AG04450 (cell line): ENCODE measurements at regions of chr1 and their contacts with region 1.

Region 1: DNA sequence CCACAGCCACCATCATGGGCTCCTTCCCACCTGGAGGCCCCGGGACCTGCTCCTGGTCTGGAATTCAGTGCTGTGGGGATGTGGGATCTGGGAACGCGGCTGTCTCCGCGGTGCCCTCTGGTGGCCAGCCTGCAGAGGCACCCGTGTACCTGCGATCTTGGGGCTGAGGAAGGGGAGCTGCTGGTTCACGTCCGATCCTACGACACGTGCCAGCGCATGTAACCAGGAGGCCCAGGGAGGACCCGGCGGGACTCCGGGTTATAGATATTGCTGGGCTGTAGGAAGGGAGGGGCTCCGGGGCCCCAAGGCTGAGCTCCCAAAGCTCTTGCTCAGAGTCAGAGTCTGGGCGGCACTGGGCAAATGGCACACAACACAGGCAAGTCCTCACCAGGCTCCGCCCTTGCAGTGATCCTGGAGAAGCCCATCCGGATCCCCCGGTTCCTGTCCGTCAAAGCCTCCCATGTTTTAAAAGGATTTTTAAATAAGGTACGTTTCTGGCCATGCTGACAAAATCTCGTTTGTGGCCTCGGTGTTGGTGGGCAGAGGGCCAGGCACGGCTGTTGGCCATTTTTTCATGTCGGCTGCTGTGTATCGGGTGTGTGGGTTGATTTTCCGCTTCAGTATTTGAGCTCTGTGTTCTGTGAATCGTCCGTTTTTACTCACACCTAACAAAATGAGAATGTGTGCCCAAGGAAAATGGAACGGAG is 20.1 kb downstream of the FAAP20 start:
- DNase-seq: no peak
- H3K4me3 ChIP-seq: peak overlapping the region; percentile 42
- H3K27ac ChIP-seq: no peak overlapping the region
- H3K27me3 ChIP-seq: no peaks in the 10 kb centered on the region
- CTCF ChIP-seq: peak; percentile 94

Region 2: GRCh38 chr1:2044510-2045319 is 129.8 kb before region 1 on chr1:
- CTCF ChIA-PET with region 1: interaction called, 11 read pairs
- POLR2A ChIA-PET with region 1: no interaction called
- DNase-seq: no peak
- H3K4me3 ChIP-seq: peak overlapping the region; percentile 7; the same call in 1 of the 2 replicates
- H3K27ac ChIP-seq: no peak overlapping the region
- H3K27me3 ChIP-seq: peaks cover 41% of the 10 kb centered on the region
- CTCF ChIP-seq: peak; percentile 60

Region 3: DNA sequence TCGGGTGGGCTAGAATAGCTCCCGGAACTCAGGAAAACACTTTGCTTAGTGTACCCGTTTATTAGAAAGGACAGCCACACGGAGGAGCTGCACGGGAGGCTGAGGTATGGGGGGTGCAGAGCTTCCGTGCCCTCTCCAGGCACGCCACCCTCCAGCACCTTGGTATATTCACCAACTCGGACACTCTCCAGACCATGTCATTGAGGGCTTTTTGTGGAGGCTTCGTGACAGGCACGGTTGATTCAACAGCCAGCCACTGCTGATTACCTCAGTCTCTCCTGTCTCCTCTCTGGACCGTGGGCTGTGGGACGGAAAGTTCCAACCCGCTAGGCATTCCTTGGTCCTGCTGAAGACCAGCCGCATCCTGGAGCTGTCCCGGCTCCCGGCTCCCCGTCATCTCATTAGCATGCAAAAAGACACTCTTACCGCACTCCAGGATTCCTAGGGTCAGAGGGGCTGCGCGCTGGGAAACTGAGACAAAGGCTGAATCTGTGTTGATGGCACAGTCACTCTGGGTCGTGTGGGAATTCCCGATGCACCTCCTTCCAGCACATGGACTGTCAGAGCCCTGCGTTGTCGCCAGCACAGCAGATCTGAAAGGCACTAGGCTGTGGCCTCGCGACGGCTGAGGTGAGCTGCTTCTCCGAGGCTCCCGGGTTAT is 58.7 kb before region 1 on chr1:
- CTCF ChIA-PET with region 1: interaction called, 10 read pairs
- POLR2A ChIA-PET with region 1: no interaction called
- DNase-seq: no peak
- H3K4me3 ChIP-seq: no peak overlapping the region
- H3K27ac ChIP-seq: no peak overlapping the region
- H3K27me3 ChIP-seq: peaks cover 26% of the 10 kb centered on the region
- CTCF ChIP-seq: no peak

Region 4: GRCh38 chr1:2148691-2149090 is 25.8 kb before region 1 on chr1:
- CTCF ChIA-PET with region 1: interaction called, 14 read pairs
- POLR2A ChIA-PET with region 1: no interaction called
- DNase-seq: no peak
- H3K4me3 ChIP-seq: no peak overlapping the region
- H3K27ac ChIP-seq: no peak overlapping the region
- H3K27me3 ChIP-seq: peaks cover 2% of the 10 kb centered on the region
- CTCF ChIP-seq: no peak

Region 5: GRCh38 chr1:2163205-2163604 is 11.3 kb before region 1 on chr1:
- CTCF ChIA-PET with region 1: interaction called, 41 read pairs
- POLR2A ChIA-PET with region 1: no interaction called
- DNase-seq: no peak
- H3K4me3 ChIP-seq: no peak overlapping the region
- H3K27ac ChIP-seq: no peak overlapping the region
- H3K27me3 ChIP-seq: peaks cover 7% of the 10 kb centered on the region
- CTCF ChIP-seq: peak; percentile 36; the same call in 1 of the 2 replicates

Region 6: GRCh38 chr1:2381741-2382620 is 207.5 kb after region 1 on chr1:
- CTCF ChIA-PET with region 1: interaction called, 14 read pairs
- POLR2A ChIA-PET with region 1: no interaction called
- DNase-seq: peak; percentile 56
- H3K4me3 ChIP-seq: no peak overlapping the region
- H3K27ac ChIP-seq: no peak overlapping the region
- H3K27me3 ChIP-seq: no peaks in the 10 kb centered on the region
- CTCF ChIP-seq: peak; percentile 95